Heart right ventricle (tissue), 16 donors: ENCODE measurements at regions of chr12 and their contacts with region 1.

Region 1: GRCh38 chr12:122190842-122191668 is 8.1 kb downstream of the LRRC43 start:
- DNase-seq: peak; percentile 22 to 44
- ATAC-seq: peak; percentile 20 to 83 (median 64)
- H3K4me3 ChIP-seq: no peak overlapping the region
- H3K27ac ChIP-seq: no peak overlapping the region
- H3K4me1 ChIP-seq: no peaks in the 10 kb centered on the region
- H3K27me3 ChIP-seq: no peaks in the 10 kb centered on the region
- CTCF ChIP-seq: peak; percentile 35 to 80 (median 66)

Region 2: DNA sequence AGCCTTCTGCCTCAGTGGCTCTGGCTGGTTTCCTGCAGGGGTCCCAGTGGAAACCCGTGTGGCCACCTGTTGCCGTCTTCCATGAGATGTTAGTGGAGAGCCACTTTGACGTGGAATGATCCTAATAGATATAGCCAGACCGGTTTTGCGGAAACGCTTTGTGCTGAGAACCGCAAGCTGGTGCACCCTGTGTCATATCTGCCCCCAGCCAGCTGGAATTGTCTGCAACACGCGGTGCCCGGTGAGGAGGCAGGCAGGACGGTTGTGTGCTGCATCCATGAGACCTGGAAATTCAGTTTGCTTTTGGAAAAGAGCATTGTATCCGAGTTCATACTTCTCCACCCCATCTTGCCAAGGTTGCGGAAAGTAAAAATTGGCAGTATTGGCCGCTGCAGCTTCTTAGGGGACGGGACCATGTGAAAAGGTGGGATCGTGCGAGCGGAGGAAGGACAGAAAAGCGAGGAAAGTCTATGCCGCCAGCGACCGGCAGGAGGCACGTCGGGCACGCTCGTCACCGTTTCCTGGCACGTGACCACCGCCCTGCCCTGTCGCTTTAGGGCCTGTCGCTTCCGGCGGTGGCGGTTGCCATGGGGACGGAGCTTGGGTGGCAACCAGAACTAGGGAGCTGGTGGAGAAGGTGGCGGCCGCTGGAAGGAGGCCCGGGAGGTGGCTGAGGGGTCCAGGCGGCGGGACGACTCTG is 272.9 kb before region 1 on chr12 and contains the start of gene CFAP251:
- intact Hi-C with region 1: loop called in 1 of 10 experiments (anchors 10 kb)
- DNase-seq: peak; percentile 90 to 96
- ATAC-seq: peak; percentile 90 to 98 (median 96)
- H3K4me3 ChIP-seq: peak within 1 kb of the TSS in 9 of 10 donors; percentile 35 to 58 (median 52)
- H3K27ac ChIP-seq: peak within 1 kb of the TSS in 7 of 10 donors; percentile 21 to 71 (median 44)
- H3K4me1 ChIP-seq: peaks cover 0 to 17% (median 5%) of the 10 kb centered on the region in 9 donors
- H3K27me3 ChIP-seq: no peaks in the 10 kb centered on the region
- CTCF ChIP-seq: peak; percentile 21 to 88 (median 67)
- total RNA-seq, gene CFAP251: 0.52 to 4.6 (median 1.9) TPM

Region 3: DNA sequence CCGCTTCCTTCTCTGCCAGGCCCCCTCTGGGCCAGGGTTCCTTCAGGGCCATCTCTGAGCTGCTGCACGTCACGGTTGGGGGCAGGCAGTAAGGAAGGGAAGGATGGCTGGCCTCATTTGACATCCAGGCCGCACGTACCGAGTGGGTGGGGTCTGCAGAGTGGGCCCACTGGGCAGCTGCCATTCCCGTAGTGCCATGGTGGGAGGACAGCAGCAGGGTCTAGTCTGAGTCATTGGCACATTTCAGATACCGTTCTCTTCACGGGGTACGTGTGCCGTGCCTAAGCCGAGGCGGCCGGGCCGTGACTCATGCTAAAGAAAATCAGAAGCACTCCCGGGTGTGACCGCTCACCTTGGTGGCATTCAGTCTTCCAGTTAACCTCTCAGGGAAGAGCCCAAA is 60.9 kb before region 1 on chr12:
- intact Hi-C with region 1: loop called in 2 of 10 experiments (anchors 2 to 5 kb)
- DNase-seq: no peak
- ATAC-seq: no peak
- H3K4me3 ChIP-seq: no peak overlapping the region
- H3K27ac ChIP-seq: no peak overlapping the region
- H3K4me1 ChIP-seq: peaks cover under 1 to 30% (median 19%) of the 10 kb centered on the region in 9 donors
- H3K27me3 ChIP-seq: no peaks in the 10 kb centered on the region
- CTCF ChIP-seq: no peak